ENCODE measurements at regions of chr1 and their contacts with region 1.

Region 1: GRCh38 chr1:225777583-225778336 is at the start of gene SRP9:
- DNase-seq: peak; percentile 99 to 100 (median 100)
- ATAC-seq: peak; percentile 99
- H3K4me3 ChIP-seq: peak within 1 kb of the TSS; percentile 95
- H3K27ac ChIP-seq: peak within 1 kb of the TSS; percentile 100
- H3K4me1 ChIP-seq: peaks cover 8 to 17% of the 10 kb centered on the region in 2 experiments; a peak in 4 of 5 replicates
- H3K27me3 ChIP-seq: no peaks in the 10 kb centered on the region
- CTCF ChIP-seq: peak; percentile 93 to 98 (median 98)
- EP300 ChIP-seq: no peak
- POLR2A ChIP-seq: peak; percentile 98
- RAD21 ChIP-seq: peak; percentile 66 to 68
- polyA plus RNA-seq, gene SRP9: 1,645 to 1,892 TPM

Region 2: DNA sequence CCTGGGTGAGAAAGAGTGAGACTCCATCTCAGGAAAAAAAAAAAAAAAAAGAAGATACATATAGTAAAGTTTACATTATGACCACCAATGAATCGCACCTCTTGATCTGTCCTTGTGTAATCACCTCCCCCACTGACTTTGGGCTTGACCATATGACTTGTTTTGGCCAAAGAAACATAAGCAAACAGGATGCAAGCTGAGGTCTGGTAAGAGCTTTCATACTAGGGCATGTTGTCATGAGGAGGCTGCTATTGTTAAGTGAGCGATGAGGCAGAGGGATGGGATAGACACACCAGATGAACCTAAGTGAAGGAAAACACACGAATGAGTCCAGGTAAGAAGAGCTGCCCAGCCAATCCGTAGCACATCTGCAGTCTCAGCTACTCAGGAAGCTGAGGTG is 135.6 kb before region 1 on chr1:
- CTCF ChIA-PET with region 1: no interaction called
- POLR2A ChIA-PET with region 1: no interaction called
- in situ Hi-C with region 1: no loop called
- intact Hi-C with region 1: no loop called
- DNase-seq: no peak
- ATAC-seq: no peak
- H3K4me3 ChIP-seq: no peak overlapping the region
- H3K27ac ChIP-seq: no peak overlapping the region
- H3K4me1 ChIP-seq: no peaks in the 10 kb centered on the region
- H3K27me3 ChIP-seq: peaks cover 0 to 6% of the 10 kb centered on the region in 2 experiments; a peak in 2 of 5 replicates
- CTCF ChIP-seq: no peak
- EP300 ChIP-seq: no peak
- POLR2A ChIP-seq: no peak
- RAD21 ChIP-seq: no peak

Region 3: DNA sequence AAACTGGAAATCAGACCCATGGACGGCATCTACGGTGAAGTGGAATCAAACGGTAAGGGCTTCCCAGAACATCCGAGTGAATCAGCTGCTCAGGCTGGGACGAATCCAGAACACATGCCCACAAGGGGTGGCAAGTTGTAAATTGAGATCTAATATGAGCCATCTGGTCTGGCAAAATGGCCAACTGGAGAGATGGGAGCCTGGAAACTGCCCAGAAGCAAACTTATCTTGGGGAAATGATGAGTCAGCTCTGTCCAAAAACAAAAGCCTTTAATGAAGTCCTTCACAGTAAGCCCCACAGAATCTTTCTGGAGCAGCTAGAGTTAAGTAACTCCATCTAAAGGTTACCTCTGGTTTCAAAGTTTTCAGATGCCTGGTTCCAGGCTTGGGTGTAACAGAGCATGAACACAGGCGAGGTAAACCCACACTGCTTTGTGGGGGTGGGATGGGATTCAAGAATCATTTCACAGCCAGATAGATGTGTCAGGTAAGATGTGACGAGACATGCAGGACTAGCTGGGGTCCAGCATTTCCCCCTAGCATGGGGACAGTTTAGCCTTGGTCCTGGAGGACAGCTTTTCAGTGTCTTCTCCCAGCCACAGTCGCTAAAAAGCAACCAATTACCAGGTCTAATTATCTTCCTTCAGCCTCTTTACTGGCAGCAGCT is 10.7 kb before region 1 on chr1:
- CTCF ChIA-PET with region 1: no interaction called
- POLR2A ChIA-PET with region 1: interaction called, 21 read pairs
- in situ Hi-C with region 1: no loop called
- intact Hi-C with region 1: no loop called
- DNase-seq: peak; percentile 40 to 68 (median 51)
- ATAC-seq: peak; percentile 63
- H3K4me3 ChIP-seq: no peak overlapping the region
- H3K27ac ChIP-seq: no peak overlapping the region
- H3K4me1 ChIP-seq: peaks cover 15 to 27% of the 10 kb centered on the region in 2 experiments
- H3K27me3 ChIP-seq: no peaks in the 10 kb centered on the region
- CTCF ChIP-seq: no peak
- EP300 ChIP-seq: 0 out of 2 replicates have a peak, but pooled peaks have one; percentile 7
- POLR2A ChIP-seq: no peak
- RAD21 ChIP-seq: no peak

Region 4: GRCh38 chr1:225794954-225795353 is 17.2 kb after region 1 on chr1:
- CTCF ChIA-PET with region 1: no interaction called
- POLR2A ChIA-PET with region 1: interaction called, 64 read pairs
- in situ Hi-C with region 1: no loop called
- intact Hi-C with region 1: no loop called
- DNase-seq: no peak
- ATAC-seq: no peak
- H3K4me3 ChIP-seq: no peak overlapping the region
- H3K27ac ChIP-seq: no peak overlapping the region
- H3K4me1 ChIP-seq: no peaks in the 10 kb centered on the region
- H3K27me3 ChIP-seq: no peaks in the 10 kb centered on the region
- CTCF ChIP-seq: no peak
- EP300 ChIP-seq: no peak
- POLR2A ChIP-seq: no peak
- RAD21 ChIP-seq: no peak

Region 5: DNA sequence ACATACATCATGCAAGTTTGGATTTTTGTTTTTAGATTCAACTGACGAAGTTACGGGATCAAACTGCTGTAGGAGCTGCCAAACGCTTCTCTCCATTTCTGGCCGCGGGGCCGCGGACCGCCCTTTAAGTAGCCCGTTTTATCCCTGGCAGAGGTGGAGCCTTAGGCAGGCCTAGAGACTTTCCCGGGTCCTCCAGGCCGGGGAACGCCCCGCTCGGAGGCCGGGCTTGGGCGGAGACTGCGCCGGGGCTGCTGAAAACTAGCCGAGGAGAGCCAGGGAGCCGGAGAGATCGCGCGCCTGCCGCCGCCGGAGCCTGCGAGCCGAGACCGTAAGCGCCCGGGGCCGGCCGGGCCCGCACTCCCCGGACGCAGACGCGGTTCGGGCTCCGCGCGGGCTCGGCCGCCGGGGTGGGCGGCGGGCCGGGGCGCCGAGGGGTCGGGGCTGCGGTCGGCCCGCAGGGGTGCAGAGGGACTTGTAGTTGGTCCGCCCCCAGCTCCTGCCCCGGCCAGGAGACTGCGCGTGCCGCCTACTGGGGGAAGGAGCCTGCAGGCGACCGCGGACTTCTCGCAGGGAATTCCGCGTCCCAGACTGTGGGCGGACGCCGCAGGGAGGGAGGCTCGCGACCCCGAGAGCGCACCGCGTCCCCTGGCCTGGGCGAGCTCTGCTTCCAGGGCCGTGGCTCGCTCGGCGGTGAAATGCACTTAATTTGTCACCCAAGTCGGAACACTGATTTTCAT is 32.2 kb after region 1 on chr1 and contains the start of gene EPHX1:
- CTCF ChIA-PET with region 1: interaction called, 3 read pairs
- POLR2A ChIA-PET with region 1: interaction called, 12 read pairs
- in situ Hi-C with region 1: no loop called
- intact Hi-C with region 1: loop called (anchors 2 kb)
- DNase-seq: peak; percentile 88 to 94 (median 92)
- ATAC-seq: peak; percentile 94
- H3K4me3 ChIP-seq: peak within 1 kb of the TSS; percentile 48
- H3K27ac ChIP-seq: 0 out of 3 replicates have a peak within 1 kb of the TSS, but pooled peaks have one; percentile 16
- H3K4me1 ChIP-seq: peaks cover 17 to 30% of the 10 kb centered on the region in 2 experiments
- H3K27me3 ChIP-seq: no peaks in the 10 kb centered on the region
- CTCF ChIP-seq: peak; percentile 20 to 60 (median 54); a peak in 4 of 6 replicates
- EP300 ChIP-seq: no peak
- POLR2A ChIP-seq: no peak; the same call in 1 of the 2 replicates
- RAD21 ChIP-seq: peak in 1 of 2 experiments; percentile 45; a peak in 2 of 4 replicates
- polyA plus RNA-seq, gene EPHX1: 0.21 to 0.48 TPM

Region 6: DNA sequence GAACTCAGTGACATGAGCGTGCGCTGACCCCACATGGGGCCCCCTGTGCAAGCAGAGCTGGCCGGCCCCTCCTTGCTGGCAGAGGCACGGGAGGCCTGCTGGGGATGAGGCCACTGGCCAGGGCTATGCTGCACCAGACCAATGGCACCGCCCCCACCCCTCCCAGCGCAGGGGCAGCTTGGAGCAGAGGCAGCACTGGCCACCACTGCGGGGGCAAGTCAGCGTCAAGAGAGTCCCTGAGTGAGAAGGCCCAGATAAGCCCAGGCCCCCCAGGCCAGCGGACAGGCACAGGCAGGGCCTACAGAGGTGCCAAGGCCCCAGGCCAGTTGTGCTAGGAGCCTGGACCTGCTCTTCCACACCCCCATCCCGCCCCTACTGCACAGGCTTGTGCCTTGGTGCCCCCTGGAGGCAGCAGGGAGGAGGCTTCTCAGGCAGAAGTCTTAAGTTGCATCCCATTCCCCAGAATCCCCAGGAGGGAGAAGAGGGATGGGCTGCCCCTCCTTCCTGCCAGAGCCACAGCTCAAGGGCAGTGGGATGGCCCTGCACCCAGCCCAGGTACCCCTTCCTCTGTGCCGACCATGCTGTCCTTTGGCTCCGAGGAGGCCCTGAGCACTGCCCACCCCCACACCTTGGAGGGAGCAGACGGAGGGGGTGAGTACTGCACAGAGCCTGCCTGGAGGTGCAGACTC is 68.0 kb after region 1 on chr1:
- CTCF ChIA-PET with region 1: interaction called, 3 read pairs
- POLR2A ChIA-PET with region 1: interaction called, 3 read pairs
- in situ Hi-C with region 1: no loop called
- intact Hi-C with region 1: loop called (anchors 2 kb)
- DNase-seq: peak; percentile 78 to 87 (median 82)
- ATAC-seq: peak; percentile 90
- H3K4me3 ChIP-seq: no peak overlapping the region
- H3K27ac ChIP-seq: no peak overlapping the region
- H3K4me1 ChIP-seq: peaks cover 9 to 42% of the 10 kb centered on the region in 2 experiments; a peak in 4 of 5 replicates
- H3K27me3 ChIP-seq: no peaks in the 10 kb centered on the region
- CTCF ChIP-seq: peak; percentile 85 to 91 (median 90)
- EP300 ChIP-seq: no peak
- POLR2A ChIP-seq: no peak; the same call in 1 of the 2 replicates
- RAD21 ChIP-seq: peak; percentile 82 to 87